Panc1 (cell line): ENCODE measurements at regions of chr1 and their contacts with region 1.

Region 1: GRCh38 chr1:9080705-9081291 is 11.4 kb upstream of the SLC2A5 start:
- DNase-seq: no peak
- ATAC-seq: peak; percentile 72; the same call in 1 of the 2 replicates
- H3K4me3 ChIP-seq: no peak overlapping the region
- H3K27ac ChIP-seq: no peak overlapping the region
- H3K4me1 ChIP-seq: no peaks in the 10 kb centered on the region; the same call in 1 of the 2 replicates
- H3K27me3 ChIP-seq: no peaks in the 10 kb centered on the region
- CTCF ChIP-seq: no peak

Region 2: GRCh38 chr1:9031484-9032259 is 49.1 kb before region 1 on chr1:
- CTCF ChIA-PET with region 1: interaction called, 7 read pairs
- POLR2A ChIA-PET with region 1: interaction called, 11 read pairs
- in situ Hi-C with region 1: no loop called
- intact Hi-C with region 1: no loop called
- DNase-seq: no peak
- ATAC-seq: no peak
- H3K4me3 ChIP-seq: no peak overlapping the region
- H3K27ac ChIP-seq: no peak overlapping the region
- H3K4me1 ChIP-seq: no peaks in the 10 kb centered on the region
- H3K27me3 ChIP-seq: no peaks in the 10 kb centered on the region
- CTCF ChIP-seq: no peak

Region 3: GRCh38 chr1:9689011-9689706 is 608.4 kb after region 1 on chr1:
- CTCF ChIA-PET with region 1: no interaction called
- POLR2A ChIA-PET with region 1: interaction called, 12 read pairs
- in situ Hi-C with region 1: no loop called
- intact Hi-C with region 1: no loop called
- DNase-seq: no peak
- ATAC-seq: peak; percentile 86
- H3K4me3 ChIP-seq: peak overlapping the region; percentile 50 to 82
- H3K27ac ChIP-seq: no peak overlapping the region
- H3K4me1 ChIP-seq: peaks cover 26% of the 10 kb centered on the region
- H3K27me3 ChIP-seq: no peaks in the 10 kb centered on the region
- CTCF ChIP-seq: no peak

Region 4: DNA sequence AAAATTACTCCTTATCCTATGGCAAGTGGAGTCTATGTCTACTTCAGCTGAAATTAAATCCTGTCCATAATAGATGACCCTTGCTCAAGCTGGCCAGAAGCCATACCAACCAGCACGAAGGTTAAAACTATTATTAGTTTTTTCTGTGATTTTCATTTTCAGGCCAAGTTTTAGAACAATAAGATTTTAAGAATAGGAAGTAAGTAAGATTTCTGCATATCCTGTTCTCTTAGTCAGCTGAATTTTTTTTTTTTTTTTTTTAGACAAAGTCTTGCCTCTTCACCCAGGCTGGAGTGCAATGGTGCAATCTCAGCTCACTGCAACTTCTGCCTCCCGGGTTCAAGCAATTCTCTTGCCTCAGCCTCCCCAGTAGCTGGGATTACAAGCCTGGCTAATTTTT is 910.1 kb after region 1 on chr1:
- CTCF ChIA-PET with region 1: no interaction called
- POLR2A ChIA-PET with region 1: no interaction called
- in situ Hi-C with region 1: no loop called
- intact Hi-C with region 1: no loop called
- DNase-seq: no peak
- ATAC-seq: no peak
- H3K4me3 ChIP-seq: no peak overlapping the region
- H3K27ac ChIP-seq: no peak overlapping the region
- H3K4me1 ChIP-seq: no peaks in the 10 kb centered on the region
- H3K27me3 ChIP-seq: no peaks in the 10 kb centered on the region
- CTCF ChIP-seq: no peak